ENCODE measurements at regions of chr10 and their contacts with region 1.

Region 1: DNA sequence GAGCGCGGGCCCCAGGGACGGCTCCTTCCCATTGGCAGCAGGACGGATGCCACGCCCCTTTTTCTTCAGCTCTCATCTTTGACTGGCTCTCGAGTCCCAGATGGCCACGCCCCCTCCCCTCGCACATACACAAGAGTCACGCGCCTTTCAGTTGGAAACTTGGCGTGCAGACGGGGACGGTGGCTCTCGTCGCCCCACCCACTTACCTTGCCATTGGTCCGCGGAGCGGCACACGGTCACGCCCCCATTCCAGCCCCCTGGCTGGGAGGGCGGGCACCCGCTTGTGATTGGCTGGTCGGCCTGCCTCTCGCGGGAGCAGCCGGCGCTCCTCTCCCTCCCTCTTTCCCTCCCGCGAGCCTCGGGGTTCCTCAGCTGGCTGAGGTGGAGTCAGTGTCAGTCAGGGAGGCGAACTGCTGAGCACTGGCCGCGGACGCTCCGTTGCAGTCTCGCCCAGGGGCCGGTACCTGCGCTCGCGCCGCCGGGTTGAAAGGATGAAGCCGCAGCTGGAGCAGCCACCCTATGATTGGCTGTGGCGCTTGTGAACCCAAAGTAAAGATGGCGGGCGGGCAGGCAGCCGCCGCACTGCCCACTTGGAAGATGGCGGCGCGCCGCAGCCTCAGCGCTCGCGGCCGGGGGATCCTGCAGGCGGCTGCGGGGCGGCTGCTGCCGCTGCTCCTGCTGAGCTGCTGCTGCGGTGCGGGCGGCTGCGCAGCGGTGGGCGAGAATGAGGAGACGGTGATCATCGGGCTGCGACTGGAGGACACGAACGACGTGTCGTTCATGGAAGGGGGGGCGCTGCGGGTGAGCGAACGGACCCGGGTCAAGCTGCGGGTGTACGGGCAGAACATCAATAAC is at the start of gene CNNM2:
- DNase-seq: peak; percentile 98
- ATAC-seq: peak; percentile 94
- H3K4me3 ChIP-seq: peak within 1 kb of the TSS; percentile 92
- H3K27ac ChIP-seq: peak within 1 kb of the TSS; percentile 72
- H3K4me1 ChIP-seq: peaks cover 16% of the 10 kb centered on the region
- H3K27me3 ChIP-seq: no peaks in the 10 kb centered on the region; a peak in 1 of 4 replicates
- CTCF ChIP-seq: no peak
- EP300 ChIP-seq: no peak
- POLR2A ChIP-seq: peak; percentile 90
- RAD21 ChIP-seq: no peak
- polyA plus RNA-seq, gene CNNM2: 0.18 to 0.33 TPM

Region 2: GRCh38 chr10:102660888-102661657 is 257.1 kb before region 1 on chr10:
- CTCF ChIA-PET with region 1: no interaction called
- POLR2A ChIA-PET with region 1: no interaction called
- RAD21 ChIA-PET with region 1: no interaction called
- SMC1A ChIA-PET with region 1: no interaction called
- in situ Hi-C with region 1: no loop called
- intact Hi-C with region 1: no loop called
- DNase-seq: no peak
- ATAC-seq: peak; percentile 94
- H3K4me3 ChIP-seq: peak overlapping the region; percentile 27; the same call in 1 of the 2 replicates
- H3K27ac ChIP-seq: peak overlapping the region; percentile 83
- H3K4me1 ChIP-seq: peaks cover 22% of the 10 kb centered on the region
- H3K27me3 ChIP-seq: no peaks in the 10 kb centered on the region
- CTCF ChIP-seq: no peak
- EP300 ChIP-seq: peak in 1 of 2 experiments; percentile 73; a peak in 2 of 4 replicates
- POLR2A ChIP-seq: peak; percentile 82
- RAD21 ChIP-seq: peak; percentile 14; the same call in 1 of the 2 replicates

Region 3: DNA sequence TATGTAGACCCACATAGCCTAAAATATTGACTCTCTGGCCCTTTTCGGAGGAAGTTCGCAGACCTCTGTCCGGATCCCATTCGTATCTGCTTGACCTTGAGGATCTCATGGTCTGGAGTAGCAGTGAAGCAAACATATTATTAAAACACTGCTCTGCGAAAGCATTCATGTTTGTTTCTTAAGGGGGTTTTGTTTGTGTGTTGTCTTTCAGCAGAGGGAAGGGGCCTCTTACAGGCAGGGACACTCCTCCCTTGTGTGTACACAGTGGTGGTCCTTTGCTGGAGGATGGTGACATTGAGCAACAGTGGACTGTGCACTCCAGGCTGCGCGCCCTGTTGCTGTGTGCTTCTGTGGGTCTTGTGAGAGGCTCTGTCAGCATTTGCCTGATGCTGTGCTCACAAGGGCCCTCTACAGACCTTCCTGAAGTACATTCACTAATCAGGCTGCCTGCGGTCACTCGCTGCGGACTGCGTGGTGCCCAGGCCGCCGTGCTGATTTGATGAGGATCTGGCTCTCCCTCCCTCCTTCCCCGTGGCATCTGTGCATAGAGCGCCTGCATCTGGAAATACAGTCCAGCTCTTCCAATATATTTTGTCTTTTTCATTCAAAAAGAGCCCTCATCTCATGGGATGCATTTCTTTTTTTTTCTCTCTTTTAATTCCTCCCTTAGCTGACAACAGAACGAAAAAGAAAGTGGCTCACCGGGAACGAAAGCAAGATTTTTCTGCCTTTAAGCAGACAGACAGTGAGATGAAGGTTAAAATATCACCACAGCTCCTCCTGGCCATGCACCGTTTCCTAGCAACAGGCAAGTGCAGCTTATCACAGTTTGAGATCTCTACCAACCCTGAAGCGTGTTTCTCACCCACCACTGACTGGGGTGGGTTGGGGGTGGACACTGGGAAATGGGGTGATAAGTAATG is 135.7 kb after region 1 on chr10:
- CTCF ChIA-PET with region 1: interaction called, 30 read pairs
- POLR2A ChIA-PET with region 1: interaction called, 3 read pairs
- RAD21 ChIA-PET with region 1: interaction called, 30 read pairs
- SMC1A ChIA-PET with region 1: interaction called, 9 read pairs
- in situ Hi-C with region 1: no loop called
- intact Hi-C with region 1: loop called (anchors 5 kb)
- DNase-seq: peak; percentile 55
- ATAC-seq: peak; percentile 99
- H3K4me3 ChIP-seq: peak overlapping the region; percentile 49; the same call in 1 of the 2 replicates
- H3K27ac ChIP-seq: no peak overlapping the region; the same call in 1 of the 2 replicates
- H3K4me1 ChIP-seq: no peaks in the 10 kb centered on the region
- H3K27me3 ChIP-seq: no peaks in the 10 kb centered on the region
- CTCF ChIP-seq: peak; percentile 39 to 68 (median 54); a peak in 4 of 6 replicates
- EP300 ChIP-seq: no peak; a peak in 1 of 4 replicates
- POLR2A ChIP-seq: no peak
- RAD21 ChIP-seq: no peak

Region 4: GRCh38 chr10:103069453-103070331 is 151.5 kb after region 1 on chr10:
- CTCF ChIA-PET with region 1: interaction called, 174 read pairs
- POLR2A ChIA-PET with region 1: interaction called, 7 read pairs
- RAD21 ChIA-PET with region 1: interaction called, 49 read pairs
- SMC1A ChIA-PET with region 1: interaction called, 164 read pairs
- in situ Hi-C with region 1: loop called (anchors 5 kb)
- intact Hi-C with region 1: loop called (anchors 1 kb)
- DNase-seq: peak; percentile 46
- ATAC-seq: peak; percentile 87
- H3K4me3 ChIP-seq: 0 out of 2 replicates have a peak overlapping the region, but pooled peaks have one; percentile 2
- H3K27ac ChIP-seq: peak overlapping the region; percentile 73
- H3K4me1 ChIP-seq: peaks cover 37% of the 10 kb centered on the region
- H3K27me3 ChIP-seq: no peaks in the 10 kb centered on the region
- CTCF ChIP-seq: peak; percentile 69 to 82 (median 70)
- EP300 ChIP-seq: no peak
- POLR2A ChIP-seq: no peak
- RAD21 ChIP-seq: peak; percentile 88

Region 5: GRCh38 chr10:103333925-103334520 is 415.8 kb after region 1 on chr10:
- CTCF ChIA-PET with region 1: interaction called, 10 read pairs
- POLR2A ChIA-PET with region 1: no interaction called
- RAD21 ChIA-PET with region 1: interaction called, 4 read pairs
- SMC1A ChIA-PET with region 1: interaction called, 3 read pairs
- in situ Hi-C with region 1: no loop called
- intact Hi-C with region 1: loop called (anchors 1 kb)
- DNase-seq: no peak
- ATAC-seq: 0 out of 3 replicates have a peak, but pooled peaks have one; percentile 38
- H3K4me3 ChIP-seq: no peak overlapping the region
- H3K27ac ChIP-seq: no peak overlapping the region
- H3K4me1 ChIP-seq: no peaks in the 10 kb centered on the region
- H3K27me3 ChIP-seq: no peaks in the 10 kb centered on the region
- CTCF ChIP-seq: peak in 2 of 3 experiments; percentile 43 to 60; a peak in 4 of 6 replicates
- EP300 ChIP-seq: no peak
- POLR2A ChIP-seq: no peak
- RAD21 ChIP-seq: peak; percentile 27; the same call in 1 of the 2 replicates

Measured in GM12878 (cell line).